T-cell (primary cell): ENCODE measurements at regions of chr10 and their contacts with region 1.

Region 1: DNA sequence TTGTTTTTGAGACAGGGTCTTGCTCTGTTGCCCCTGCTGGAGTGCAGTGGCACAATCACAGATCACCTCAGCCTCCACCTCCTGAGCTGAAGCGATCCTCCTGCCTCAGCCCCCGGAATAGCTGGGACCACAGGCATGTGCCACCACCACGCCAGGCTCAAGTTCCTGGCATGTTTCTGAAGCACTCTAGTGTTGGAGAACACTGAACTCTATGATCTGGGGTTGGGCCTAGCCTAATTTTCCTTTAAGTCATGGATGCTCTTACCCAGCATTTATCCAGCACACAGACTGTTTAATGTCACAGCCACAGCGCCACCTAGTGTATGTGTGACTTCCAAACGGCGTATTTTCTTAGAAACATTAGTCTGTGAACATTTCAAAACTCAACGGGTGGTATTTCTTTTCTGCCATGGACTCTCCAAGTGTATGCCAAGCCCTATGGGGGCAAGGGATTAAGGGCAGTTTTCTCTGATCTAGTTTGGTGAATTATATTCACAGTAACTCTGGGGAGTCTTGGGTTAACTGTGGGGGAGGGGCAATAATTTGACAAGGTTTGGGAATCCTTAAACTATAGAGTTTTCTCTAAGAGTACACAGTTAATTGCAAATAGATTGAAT is 91.8 kb downstream of the CREM start:
- DNase-seq: peak; percentile 57 to 93 (median 78)
- ATAC-seq: peak; percentile 65 to 81 (median 72)
- H3K4me3 ChIP-seq: no peak overlapping the region
- H3K4me3 Mint-ChIP-seq: peak overlapping the region; percentile 8 to 57 (median 39)
- H3K27ac ChIP-seq: no peak overlapping the region
- H3K27ac Mint-ChIP-seq: peak overlapping the region in 1 of 2 donors; percentile 71
- H3K4me1 ChIP-seq: peaks cover 0 to 5% of the 10 kb centered on the region in 2 experiments
- H3K4me1 Mint-ChIP-seq: peaks cover 11 to 31% (median 20%) of the 10 kb centered on the region in 3 donors
- H3K27me3 ChIP-seq: peaks cover 0 to 6% of the 10 kb centered on the region in 2 experiments
- H3K27me3 Mint-ChIP-seq: no peaks in the 10 kb centered on the region

Region 2: DNA sequence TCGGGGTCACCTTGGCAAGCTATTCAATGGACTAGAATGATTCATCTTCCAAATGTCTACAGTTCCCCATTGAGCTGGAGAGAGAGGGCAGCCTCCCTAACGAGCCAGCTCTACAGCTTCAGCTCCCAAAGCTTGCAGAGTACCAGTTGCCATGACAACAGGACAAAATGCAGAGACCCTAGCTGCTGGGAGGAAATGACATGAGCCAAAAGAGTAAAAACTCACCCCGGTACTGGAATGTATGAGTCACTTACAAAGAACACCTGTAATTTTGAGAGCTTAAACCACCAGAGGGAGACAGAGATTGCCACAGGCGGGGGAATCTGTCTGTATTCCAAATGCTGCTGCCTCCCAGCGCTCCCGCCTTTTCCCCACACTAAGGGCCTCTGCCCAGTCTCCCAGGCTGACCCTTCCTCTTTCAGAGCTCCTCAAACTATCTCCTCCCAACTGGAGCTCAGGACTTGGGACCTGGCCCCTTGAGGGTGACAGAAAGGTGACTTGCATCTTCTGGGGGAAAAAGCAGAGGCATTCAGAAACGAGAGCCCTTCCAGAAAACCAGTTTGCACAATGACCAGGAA is 223.8 kb before region 1 on chr10:
- CTCF ChIA-PET with region 1: interaction called in 1 of 2 experiments, 11 read pairs
- POLR2A ChIA-PET with region 1: no interaction called
- DNase-seq: peak in 20 of 35 experiments; percentile 2 to 58 (median 15)
- ATAC-seq: peak; percentile 70 to 82 (median 72)
- H3K4me3 ChIP-seq: no peak overlapping the region
- H3K4me3 Mint-ChIP-seq: no peak overlapping the region
- H3K27ac ChIP-seq: no peak overlapping the region
- H3K27ac Mint-ChIP-seq: peak overlapping the region; percentile 19 to 55
- H3K4me1 ChIP-seq: peaks cover 0 to 9% of the 10 kb centered on the region in 2 experiments
- H3K4me1 Mint-ChIP-seq: peaks cover 7 to 13% (median 12%) of the 10 kb centered on the region in 3 donors
- H3K27me3 ChIP-seq: no peaks in the 10 kb centered on the region
- H3K27me3 Mint-ChIP-seq: no peaks in the 10 kb centered on the region

Region 3: DNA sequence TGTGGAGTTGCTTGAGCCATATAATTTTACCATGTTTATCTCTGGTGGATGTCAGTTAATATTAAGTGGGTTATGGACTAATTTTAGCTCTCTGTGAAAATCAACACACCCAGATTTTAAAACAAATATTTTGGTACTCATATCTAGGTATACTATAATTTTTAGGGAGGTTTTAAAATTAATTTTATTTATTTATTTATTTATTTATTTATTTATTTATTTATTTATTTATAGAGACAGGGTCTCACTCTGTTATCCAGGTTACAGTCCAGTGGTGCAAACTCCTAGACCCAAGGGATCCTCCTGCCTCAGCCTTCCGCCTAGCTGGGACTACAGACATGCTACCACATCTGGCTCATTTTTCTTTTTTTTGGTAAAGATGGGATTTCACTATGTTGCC is 99.1 kb before region 1 on chr10:
- CTCF ChIA-PET with region 1: interaction called, 14 to 44 read pairs
- POLR2A ChIA-PET with region 1: interaction called in 1 of 2 experiments, 3 read pairs
- DNase-seq: no peak
- ATAC-seq: no peak
- H3K4me3 ChIP-seq: no peak overlapping the region
- H3K4me3 Mint-ChIP-seq: no peak overlapping the region
- H3K27ac ChIP-seq: no peak overlapping the region
- H3K27ac Mint-ChIP-seq: no peak overlapping the region
- H3K4me1 ChIP-seq: no peaks in the 10 kb centered on the region
- H3K4me1 Mint-ChIP-seq: peaks cover 0 to 12% (median 3%) of the 10 kb centered on the region in 3 donors
- H3K27me3 ChIP-seq: no peaks in the 10 kb centered on the region
- H3K27me3 Mint-ChIP-seq: no peaks in the 10 kb centered on the region

Region 4: GRCh38 chr10:35126530-35127296 is 91.7 kb before region 1 on chr10 and contains the start of gene CREM:
- CTCF ChIA-PET with region 1: interaction called, 14 to 44 read pairs
- POLR2A ChIA-PET with region 1: interaction called in 1 of 2 experiments, 3 read pairs
- DNase-seq: peak; percentile 97 to 100 (median 99)
- ATAC-seq: peak; percentile 83 to 90 (median 88)
- H3K4me3 ChIP-seq: peak within 1 kb of the TSS; percentile 84 to 92
- H3K4me3 Mint-ChIP-seq: peak within 1 kb of the TSS; percentile 88 to 90 (median 89)
- H3K27ac ChIP-seq: peak within 1 kb of the TSS; percentile 100
- H3K27ac Mint-ChIP-seq: peak within 1 kb of the TSS; percentile 94 to 95
- H3K4me1 ChIP-seq: peaks cover 8 to 22% of the 10 kb centered on the region in 2 experiments
- H3K4me1 Mint-ChIP-seq: peaks cover 35 to 57% (median 38%) of the 10 kb centered on the region in 3 donors
- H3K27me3 ChIP-seq: no peaks in the 10 kb centered on the region
- H3K27me3 Mint-ChIP-seq: no peaks in the 10 kb centered on the region
- total RNA-seq, gene CREM: 20.6 to 57.2 (median 26.0) TPM

Region 5: DNA sequence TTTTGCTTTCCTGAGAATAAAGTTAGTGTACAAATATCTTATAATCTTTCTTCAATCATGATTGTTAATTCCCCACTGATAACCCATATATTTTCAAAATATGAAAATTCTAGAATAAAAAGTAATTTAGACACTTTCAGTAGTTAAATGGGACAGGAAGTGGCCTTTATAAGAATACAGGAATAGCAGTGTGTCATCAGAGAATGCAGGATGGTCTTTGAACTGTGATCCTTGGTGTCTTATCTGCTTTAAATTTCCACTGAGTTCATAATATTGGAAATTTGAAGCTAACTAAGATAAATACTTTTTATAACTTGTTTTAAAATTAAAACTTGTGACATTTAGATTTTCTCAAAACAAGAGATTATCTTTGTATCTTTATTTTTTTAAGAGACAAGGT is 16.4 kb before region 1 on chr10:
- CTCF ChIA-PET with region 1: interaction called, 11 read pairs
- POLR2A ChIA-PET with region 1: no interaction called
- DNase-seq: no peak
- ATAC-seq: no peak
- H3K4me3 ChIP-seq: no peak overlapping the region
- H3K4me3 Mint-ChIP-seq: no peak overlapping the region
- H3K27ac ChIP-seq: no peak overlapping the region
- H3K27ac Mint-ChIP-seq: peak overlapping the region in 1 of 2 donors; percentile 34
- H3K4me1 ChIP-seq: peaks cover 0 to 4% of the 10 kb centered on the region in 2 experiments
- H3K4me1 Mint-ChIP-seq: peaks cover 0 to 28% (median 24%) of the 10 kb centered on the region in 3 donors
- H3K27me3 ChIP-seq: no peaks in the 10 kb centered on the region
- H3K27me3 Mint-ChIP-seq: no peaks in the 10 kb centered on the region